AG04450 (cell line): ENCODE measurements at regions of chr1 and their contacts with region 1.

Region 1: DNA sequence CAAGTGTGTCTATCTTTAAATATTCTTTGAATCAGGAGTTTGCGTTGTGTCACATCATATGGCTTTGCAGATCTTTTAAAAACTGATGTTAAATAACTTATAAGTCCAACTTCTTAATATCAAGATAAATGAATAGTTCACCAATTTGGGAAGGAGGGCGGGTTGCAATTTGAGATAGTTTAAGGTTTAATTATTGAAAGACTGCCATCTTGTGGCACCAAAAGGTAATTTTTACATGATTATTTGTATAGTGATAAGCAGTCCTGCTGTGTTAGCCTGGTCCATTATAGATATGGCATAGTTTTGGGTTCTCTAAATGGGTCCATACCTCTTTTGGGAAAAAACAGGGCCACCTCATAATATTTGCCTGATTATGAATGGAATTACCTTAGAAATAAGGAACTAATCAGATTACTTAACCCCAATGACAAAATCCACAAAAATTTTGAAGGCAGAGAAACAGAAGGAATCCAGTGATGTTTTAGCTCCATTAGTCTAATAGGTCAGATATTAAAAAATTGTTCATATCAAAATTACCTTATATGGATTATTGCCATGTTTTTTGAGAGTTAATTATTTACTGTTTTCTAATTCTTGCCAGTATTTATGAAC is 64.3 kb downstream of the PRKAA2 start:
- DNase-seq: peak; percentile 29
- H3K4me3 ChIP-seq: no peak overlapping the region
- H3K27ac ChIP-seq: no peak overlapping the region
- H3K27me3 ChIP-seq: no peaks in the 10 kb centered on the region
- CTCF ChIP-seq: peak; percentile 57

Region 2: DNA sequence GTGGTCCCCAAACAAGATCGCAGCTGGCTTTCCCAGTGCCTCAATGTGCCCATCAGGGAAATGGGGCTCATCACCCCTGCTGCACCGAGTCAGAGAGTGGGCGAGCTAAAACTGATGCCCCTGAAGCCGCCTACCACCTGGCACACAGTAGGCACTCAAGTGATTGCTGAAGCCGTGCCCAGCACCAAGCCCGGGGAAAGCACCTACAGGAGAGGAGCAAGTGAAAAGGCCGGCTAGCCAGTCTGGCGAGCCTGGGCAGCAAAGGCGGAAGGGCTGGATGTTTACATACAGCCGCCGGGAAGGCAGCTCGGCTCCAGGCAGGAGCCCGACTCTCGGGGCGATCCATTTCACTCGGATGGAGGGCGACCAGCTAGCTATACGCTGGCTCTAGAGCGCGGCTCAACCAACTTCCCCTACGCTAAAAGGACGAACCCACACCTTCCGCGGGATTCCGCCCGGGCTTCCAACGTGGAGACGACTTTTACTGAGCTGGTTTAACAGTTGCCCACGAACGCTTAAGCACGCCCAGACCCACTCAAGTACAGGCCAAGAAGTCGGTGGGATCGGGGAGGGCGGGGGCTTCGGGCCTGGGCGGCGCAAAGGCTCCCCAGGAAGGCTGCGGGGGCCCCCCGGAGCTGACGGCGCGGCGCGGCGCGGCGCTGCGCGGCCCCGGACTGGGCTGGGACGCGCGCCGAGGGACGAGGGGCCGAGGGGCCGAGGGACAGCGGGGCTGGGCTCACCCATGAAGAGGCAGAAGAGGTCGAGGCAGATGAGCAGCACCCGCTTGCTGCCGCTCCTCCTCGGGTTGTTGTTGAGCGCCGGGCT is 131.0 kb before region 1 on chr1:
- CTCF ChIA-PET with region 1: interaction called, 32 read pairs
- POLR2A ChIA-PET with region 1: no interaction called
- DNase-seq: no peak
- H3K4me3 ChIP-seq: peak overlapping the region; percentile 100
- H3K27ac ChIP-seq: peak overlapping the region; percentile 81
- H3K27me3 ChIP-seq: no peaks in the 10 kb centered on the region
- CTCF ChIP-seq: no peak

Region 3: DNA sequence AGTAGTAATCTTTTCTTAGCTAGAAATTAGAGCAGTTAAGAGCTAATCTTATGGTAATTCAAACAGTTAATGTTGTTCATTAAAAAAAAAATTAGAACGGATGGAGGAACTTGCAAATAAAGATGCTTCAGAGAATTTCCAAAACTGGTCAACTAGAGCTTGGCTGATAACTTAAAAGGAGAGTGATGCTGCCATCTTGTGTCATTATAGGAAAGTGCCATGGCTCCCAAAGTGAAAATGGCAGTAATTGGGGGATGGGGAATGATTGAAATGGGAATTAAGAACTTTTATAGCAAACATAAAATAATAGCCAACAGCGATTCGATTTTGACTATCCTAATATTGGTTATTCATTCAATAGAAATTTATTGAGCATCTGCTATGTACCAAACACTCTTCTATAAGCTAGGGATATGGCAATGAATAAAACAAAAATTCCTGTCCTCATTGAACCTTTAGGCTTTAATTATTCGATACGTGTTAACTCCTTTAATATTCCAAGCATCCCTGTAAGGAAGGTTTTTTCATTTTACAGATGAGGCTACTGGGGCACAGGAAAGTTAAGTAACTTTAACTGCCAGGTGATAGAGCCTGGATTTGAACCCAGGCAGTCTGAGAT is 124.4 kb before region 1 on chr1:
- CTCF ChIA-PET with region 1: interaction called, 32 read pairs
- POLR2A ChIA-PET with region 1: no interaction called
- DNase-seq: peak; percentile 49
- H3K4me3 ChIP-seq: no peak overlapping the region
- H3K27ac ChIP-seq: no peak overlapping the region
- H3K27me3 ChIP-seq: no peaks in the 10 kb centered on the region
- CTCF ChIP-seq: peak; percentile 81

Region 4: DNA sequence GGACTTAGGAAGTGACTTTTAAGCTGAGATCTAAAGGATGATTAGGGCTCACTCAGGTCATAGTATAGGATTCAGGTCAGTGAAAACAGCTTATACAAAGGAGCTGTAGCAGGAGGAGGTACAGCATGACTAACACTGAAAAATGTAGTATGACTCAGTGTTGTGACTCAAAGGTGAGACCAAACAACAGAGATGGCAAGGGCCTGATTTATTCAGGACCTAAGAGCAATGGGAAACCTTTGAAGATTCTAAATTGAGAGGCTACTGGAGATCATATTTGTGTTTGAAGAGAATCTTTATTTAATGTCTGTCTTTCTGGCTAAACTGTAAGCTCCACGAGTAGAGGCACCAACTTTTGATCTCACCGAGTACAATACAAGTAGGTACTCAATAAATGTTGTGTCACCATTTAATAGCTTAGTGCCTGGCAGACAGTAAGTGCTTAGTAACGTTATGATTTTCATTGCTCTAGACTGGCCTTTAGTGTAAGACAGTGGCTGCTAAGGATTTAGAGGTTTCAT is 20.8 kb before region 1 on chr1:
- CTCF ChIA-PET with region 1: interaction called, 11 read pairs
- POLR2A ChIA-PET with region 1: no interaction called
- DNase-seq: no peak
- H3K4me3 ChIP-seq: no peak overlapping the region
- H3K27ac ChIP-seq: no peak overlapping the region
- H3K27me3 ChIP-seq: no peaks in the 10 kb centered on the region
- CTCF ChIP-seq: no peak

Region 5: DNA sequence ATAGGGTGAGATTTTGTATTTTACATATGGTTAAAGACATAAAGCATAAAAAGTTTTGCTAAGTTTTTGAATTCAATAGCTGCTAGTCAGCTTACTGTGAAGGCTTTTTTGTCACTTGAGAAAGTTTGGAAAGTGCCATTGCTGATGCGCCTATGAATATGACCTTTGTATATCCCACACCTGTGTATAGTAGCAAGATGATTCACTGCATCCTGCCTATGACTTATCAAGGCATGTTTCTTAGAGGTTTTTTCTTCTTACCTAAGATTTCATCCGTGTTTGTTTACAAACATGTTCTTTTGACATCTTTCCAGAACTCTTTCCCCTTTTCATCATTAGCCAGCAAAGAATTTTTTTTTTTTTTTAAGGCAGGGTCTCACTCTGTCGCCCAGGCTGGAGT is 12.7 kb before region 1 on chr1:
- CTCF ChIA-PET with region 1: interaction called, 33 read pairs
- POLR2A ChIA-PET with region 1: no interaction called
- DNase-seq: no peak
- H3K4me3 ChIP-seq: no peak overlapping the region
- H3K27ac ChIP-seq: no peak overlapping the region
- H3K27me3 ChIP-seq: no peaks in the 10 kb centered on the region
- CTCF ChIP-seq: no peak